ENCODE measurements at regions of chr4 and their contacts with region 1.

Region 1: GRCh38 chr4:158624889-158625478 is 46.7 kb downstream of the C4orf46 start:
- DNase-seq: peak; percentile 48
- H3K4me3 ChIP-seq: no peak overlapping the region
- H3K27ac ChIP-seq: no peak overlapping the region
- H3K4me1 ChIP-seq: no peaks in the 10 kb centered on the region
- H3K27me3 ChIP-seq: peaks cover 1% of the 10 kb centered on the region
- CTCF ChIP-seq: peak; percentile 74 to 78

Region 2: GRCh38 chr4:157978680-157979361 is 646.2 kb before region 1 on chr4:
- CTCF ChIA-PET with region 1: no interaction called
- dilution Hi-C with region 1: no loop called
- in situ Hi-C with region 1: loop called in 1 of 2 experiments (anchors 25 kb)
- intact Hi-C with region 1: no loop called
- DNase-seq: peak; percentile 44
- H3K4me3 ChIP-seq: no peak overlapping the region
- H3K27ac ChIP-seq: no peak overlapping the region
- H3K4me1 ChIP-seq: no peaks in the 10 kb centered on the region
- H3K27me3 ChIP-seq: peaks cover 2% of the 10 kb centered on the region
- CTCF ChIP-seq: peak; percentile 81 to 85

Region 3: DNA sequence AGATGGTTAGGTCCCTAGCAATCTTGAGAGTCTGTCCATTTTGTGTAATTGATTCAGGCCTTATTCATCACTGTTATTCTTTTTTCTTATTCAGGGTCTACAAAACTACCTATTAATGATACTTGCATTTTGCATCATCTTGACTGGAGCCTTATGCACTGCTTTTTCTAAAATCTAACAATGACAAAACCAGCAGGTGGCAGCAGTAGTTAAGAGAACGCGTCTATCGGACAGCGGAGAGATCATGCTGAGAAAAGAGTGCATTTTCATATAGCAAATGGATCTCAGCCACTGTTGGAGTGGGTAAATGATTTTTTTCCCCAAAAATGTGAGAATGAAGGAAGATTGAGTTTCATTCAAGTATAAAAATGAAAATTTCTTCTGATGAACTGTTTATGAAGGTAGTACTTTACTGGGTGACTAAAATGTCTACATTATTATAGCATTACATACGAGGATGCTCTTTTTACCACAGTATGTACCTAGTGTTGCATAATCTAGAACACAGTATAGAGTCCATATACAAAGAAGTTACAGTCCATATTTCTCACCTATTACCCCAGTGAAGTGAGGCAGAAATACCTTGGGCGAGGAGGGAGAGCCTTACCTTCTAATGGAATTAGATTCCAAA is 371.5 kb before region 1 on chr4:
- CTCF ChIA-PET with region 1: no interaction called
- dilution Hi-C with region 1: no loop called
- in situ Hi-C with region 1: loop called in 1 of 2 experiments (anchors 10 kb)
- intact Hi-C with region 1: loop called (anchors 2 kb)
- DNase-seq: peak; percentile 43
- H3K4me3 ChIP-seq: no peak overlapping the region
- H3K27ac ChIP-seq: no peak overlapping the region
- H3K4me1 ChIP-seq: no peaks in the 10 kb centered on the region
- H3K27me3 ChIP-seq: no peaks in the 10 kb centered on the region
- CTCF ChIP-seq: peak; percentile 52 to 66

Region 4: GRCh38 chr4:158259955-158260575 is 364.9 kb before region 1 on chr4:
- CTCF ChIA-PET with region 1: no interaction called
- dilution Hi-C with region 1: no loop called
- in situ Hi-C with region 1: loop called (anchors 5 to 10 kb)
- intact Hi-C with region 1: loop called (anchors 1 kb)
- DNase-seq: peak; percentile 11
- H3K4me3 ChIP-seq: no peak overlapping the region
- H3K27ac ChIP-seq: no peak overlapping the region
- H3K4me1 ChIP-seq: no peaks in the 10 kb centered on the region
- H3K27me3 ChIP-seq: no peaks in the 10 kb centered on the region
- CTCF ChIP-seq: peak; percentile 25 to 39

Region 5: GRCh38 chr4:158410272-158410671 is 214.7 kb before region 1 on chr4:
- CTCF ChIA-PET with region 1: no interaction called
- dilution Hi-C with region 1: no loop called
- in situ Hi-C with region 1: loop called in 1 of 2 experiments (anchors 10 kb)
- intact Hi-C with region 1: loop called (anchors 1 kb)
- DNase-seq: peak; percentile 22
- H3K4me3 ChIP-seq: no peak overlapping the region
- H3K27ac ChIP-seq: no peak overlapping the region
- H3K4me1 ChIP-seq: no peaks in the 10 kb centered on the region
- H3K27me3 ChIP-seq: no peaks in the 10 kb centered on the region
- CTCF ChIP-seq: peak; percentile 12 to 35

Region 6: GRCh38 chr4:158496030-158496741 is 128.8 kb before region 1 on chr4:
- CTCF ChIA-PET with region 1: no interaction called
- dilution Hi-C with region 1: no loop called
- in situ Hi-C with region 1: no loop called
- intact Hi-C with region 1: loop called (anchors 1 kb)
- DNase-seq: no peak
- H3K4me3 ChIP-seq: no peak overlapping the region
- H3K27ac ChIP-seq: no peak overlapping the region
- H3K4me1 ChIP-seq: no peaks in the 10 kb centered on the region
- H3K27me3 ChIP-seq: no peaks in the 10 kb centered on the region
- CTCF ChIP-seq: peak; percentile 53 to 68